Activated CD4-positive, alpha-beta memory T cell treated with anti-CD3 and anti-CD28 coated beads for 36 hours (primary cell): ENCODE measurements at regions of chrX and their contacts with region 1.

Region 1: GRCh38 chrX:71198066-71198465 is 25.0 kb upstream of the GJB1 start:
- DNase-seq: peak; percentile 27
- H3K4me3 Mint-ChIP-seq: peak overlapping the region; percentile 92
- H3K27ac Mint-ChIP-seq: peak overlapping the region; percentile 93
- H3K4me1 Mint-ChIP-seq: peaks cover 3% of the 10 kb centered on the region
- H3K27me3 Mint-ChIP-seq: no peaks in the 10 kb centered on the region

Region 2: DNA sequence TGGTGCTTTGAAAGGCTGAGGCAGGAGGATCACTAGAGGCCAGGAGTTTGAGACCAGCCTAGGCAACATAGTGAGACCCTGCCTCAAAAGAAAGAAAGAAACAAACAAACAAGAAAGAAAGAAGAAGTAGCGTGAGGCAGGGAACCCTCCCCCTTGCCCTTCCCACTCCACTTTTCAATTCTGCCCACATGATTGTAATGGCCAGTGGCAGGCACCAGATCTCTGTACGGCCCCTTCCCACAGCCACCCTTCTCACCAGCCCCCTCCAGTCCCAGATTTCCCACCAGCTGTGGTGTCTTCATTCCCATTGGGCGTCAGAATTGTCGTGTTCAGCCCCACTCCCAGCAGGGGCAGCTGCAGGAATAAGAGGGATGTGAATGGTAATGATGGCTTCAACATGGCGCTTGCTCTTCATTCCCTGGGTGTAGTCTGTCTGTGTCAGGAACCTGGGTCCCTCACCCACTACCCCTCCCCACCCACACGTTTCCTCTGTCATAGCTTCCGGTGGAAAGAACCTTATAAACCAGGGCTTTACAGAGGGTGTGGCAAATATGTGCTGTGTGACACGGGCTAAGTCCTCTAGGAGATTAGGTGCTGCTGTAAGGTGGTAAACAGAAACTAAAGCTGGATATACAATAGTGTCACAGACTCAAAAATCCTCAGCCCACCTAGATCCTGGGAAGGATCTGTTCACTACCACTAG is 86.8 kb before region 1 on chrX and contains the start of gene IL2RG:
- CTCF ChIA-PET with region 1: no interaction called
- POLR2A ChIA-PET with region 1: no interaction called
- intact Hi-C with region 1: loop called (anchors 5 kb)
- DNase-seq: peak; percentile 85
- H3K4me3 Mint-ChIP-seq: peak within 1 kb of the TSS; percentile 99
- H3K27ac Mint-ChIP-seq: peak within 1 kb of the TSS; percentile 98
- H3K4me1 Mint-ChIP-seq: peaks cover 38% of the 10 kb centered on the region
- H3K27me3 Mint-ChIP-seq: no peaks in the 10 kb centered on the region
- total RNA-seq, gene IL2RG: 289 to 290 TPM

Region 3: DNA sequence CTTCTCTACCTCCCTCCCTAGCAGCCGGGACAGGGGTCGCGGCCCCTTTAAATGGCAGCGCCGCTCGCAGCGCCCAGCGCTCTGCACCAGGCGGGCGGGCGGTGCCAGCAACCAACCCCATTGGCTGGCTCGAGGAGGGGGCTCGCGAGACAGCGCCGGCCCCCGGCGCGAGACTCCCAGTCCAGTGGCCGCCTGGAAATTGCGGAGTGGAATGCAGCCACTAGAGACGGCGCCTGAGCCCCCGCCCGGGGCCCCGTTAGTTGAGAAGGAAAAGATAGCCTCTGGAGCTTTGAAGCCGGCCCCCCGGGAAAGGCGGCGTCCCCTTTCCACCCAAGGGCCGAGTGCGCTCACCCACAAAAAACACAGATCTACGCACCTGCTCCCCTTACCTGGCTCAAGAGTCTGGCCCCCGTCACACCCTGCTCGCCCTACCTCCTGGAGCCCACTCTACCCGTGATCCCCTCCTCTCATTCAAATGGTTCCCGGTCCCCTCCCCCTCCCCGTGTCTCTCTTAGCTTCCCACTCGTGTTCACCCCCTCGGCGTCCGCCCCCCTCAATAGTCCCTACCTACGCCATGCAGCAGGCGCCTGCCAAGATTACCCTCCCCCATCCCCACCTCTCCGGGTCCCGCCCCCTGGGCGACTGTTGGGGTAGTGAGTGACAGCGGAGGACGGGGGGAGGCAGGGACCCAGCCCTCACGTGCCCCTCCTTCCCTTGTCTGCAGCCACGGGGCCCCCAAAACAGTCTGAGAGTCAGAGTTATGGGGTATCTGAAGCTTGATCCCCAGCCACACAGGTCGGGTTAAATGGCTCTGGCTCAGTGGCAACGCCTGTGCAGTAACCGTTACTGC is 56.3 kb after region 1 on chrX and contains the start of gene ZMYM3:
- CTCF ChIA-PET with region 1: interaction called, 3 read pairs
- POLR2A ChIA-PET with region 1: no interaction called
- intact Hi-C with region 1: loop called (anchors 5 kb)
- DNase-seq: peak; percentile 84
- H3K4me3 Mint-ChIP-seq: peak within 1 kb of the TSS; percentile 86
- H3K27ac Mint-ChIP-seq: peak within 1 kb of the TSS; percentile 73
- H3K4me1 Mint-ChIP-seq: peaks cover 25% of the 10 kb centered on the region
- H3K27me3 Mint-ChIP-seq: no peaks in the 10 kb centered on the region
- total RNA-seq, gene ZMYM3: 17.2 to 17.5 TPM

Region 4: DNA sequence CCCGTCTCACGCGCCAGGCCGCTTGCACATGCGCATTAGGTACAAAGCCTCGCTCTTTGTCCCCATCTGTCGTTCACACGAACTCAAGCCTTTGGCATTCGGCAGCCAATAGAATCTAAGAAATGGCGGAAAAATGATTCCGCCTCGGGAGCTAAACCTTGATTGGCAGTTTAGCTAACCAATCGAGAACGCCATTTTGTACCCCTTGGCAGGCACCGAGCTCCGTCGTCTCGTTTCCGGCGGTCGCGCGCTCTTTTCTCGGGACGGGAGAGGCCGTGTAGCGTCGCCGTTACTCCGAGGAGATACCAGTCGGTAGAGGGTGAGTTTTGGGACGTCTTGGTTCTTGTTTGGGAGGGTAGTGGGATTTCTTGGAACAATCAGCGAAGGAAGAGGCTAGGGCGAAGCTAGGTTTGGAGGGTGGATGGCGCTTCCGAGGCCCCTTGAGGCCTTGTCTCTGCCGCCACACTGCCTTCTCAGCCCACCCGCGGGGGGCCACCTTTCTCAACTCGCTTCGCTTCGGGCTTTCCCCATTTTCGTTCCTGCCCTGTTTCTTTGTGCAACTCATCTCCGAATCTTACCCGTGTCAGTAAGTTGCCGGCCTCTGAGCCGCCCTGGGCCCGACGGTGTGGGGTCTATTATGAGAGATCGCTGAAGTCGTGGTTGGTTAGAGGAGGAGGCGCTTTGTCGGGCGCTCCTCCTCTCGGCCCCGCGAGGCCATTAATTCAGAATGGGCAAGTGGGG is 85.5 kb after region 1 on chrX and contains the start of gene NONO:
- CTCF ChIA-PET with region 1: interaction called, 4 read pairs
- POLR2A ChIA-PET with region 1: interaction called, 5 read pairs
- intact Hi-C with region 1: loop called (anchors 1 kb)
- DNase-seq: peak; percentile 85
- H3K4me3 Mint-ChIP-seq: peak within 1 kb of the TSS; percentile 98
- H3K27ac Mint-ChIP-seq: peak within 1 kb of the TSS; percentile 100
- H3K4me1 Mint-ChIP-seq: peaks cover 10% of the 10 kb centered on the region
- H3K27me3 Mint-ChIP-seq: no peaks in the 10 kb centered on the region
- total RNA-seq, gene NONO: 450 to 460 TPM

Region 5: GRCh38 chrX:71622576-71623450 is 424.7 kb after region 1 on chrX:
- CTCF ChIA-PET with region 1: no interaction called
- POLR2A ChIA-PET with region 1: no interaction called
- intact Hi-C with region 1: loop called (anchors 2 kb)
- DNase-seq: peak; percentile 85
- H3K4me3 Mint-ChIP-seq: peak overlapping the region; percentile 57
- H3K27ac Mint-ChIP-seq: peak overlapping the region; percentile 92
- H3K4me1 Mint-ChIP-seq: peaks cover 64% of the 10 kb centered on the region
- H3K27me3 Mint-ChIP-seq: no peaks in the 10 kb centered on the region